ENCODE measurements at regions of chr2 and their contacts with region 1.

Region 1: DNA sequence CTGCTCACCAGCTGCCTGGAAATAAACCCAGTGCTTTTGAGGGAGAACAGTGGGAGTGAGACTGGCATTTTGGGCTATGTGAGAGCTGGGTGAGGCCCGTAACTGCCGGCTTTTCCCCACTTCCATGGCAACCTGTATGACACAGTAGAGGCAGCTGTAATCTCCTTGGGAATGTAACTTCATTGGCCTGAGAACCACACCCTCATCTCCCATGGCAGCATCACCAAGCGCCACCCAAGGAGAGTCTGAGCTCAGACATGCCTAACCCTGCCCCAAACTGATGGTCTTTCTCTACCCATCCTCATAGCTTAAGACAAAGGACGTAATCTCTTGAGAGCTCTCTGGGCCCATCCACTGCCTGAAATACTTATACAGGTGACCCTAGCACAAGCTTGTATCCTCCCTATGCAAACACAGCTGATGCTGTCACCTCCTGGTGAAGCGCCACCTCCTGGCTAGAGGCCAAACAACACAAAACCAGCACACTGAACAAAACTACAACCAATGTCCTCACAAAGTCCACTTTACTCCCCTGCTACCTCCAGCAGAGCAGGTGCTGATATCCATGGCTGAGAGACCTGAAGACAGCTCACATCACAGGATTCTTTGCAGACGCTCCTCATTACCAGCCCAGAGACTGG is 763.4 kb upstream of the NRXN1 start:
- DNase-seq: no peak
- CTCF ChIP-seq: no peak

Region 2: GRCh38 chr2:51516667-51517066 is 278.7 kb before region 1 on chr2:
- CTCF ChIA-PET with region 1: no interaction called
- POLR2A ChIA-PET with region 1: no interaction called
- DNase-seq: no peak
- CTCF ChIP-seq: no peak

Region 3: GRCh38 chr2:51628917-51629316 is 166.5 kb before region 1 on chr2:
- CTCF ChIA-PET with region 1: no interaction called
- POLR2A ChIA-PET with region 1: no interaction called
- DNase-seq: no peak
- CTCF ChIP-seq: no peak

Region 4: GRCh38 chr2:51782921-51783765 is 12.2 kb before region 1 on chr2:
- CTCF ChIA-PET with region 1: interaction called, 17 read pairs
- POLR2A ChIA-PET with region 1: no interaction called
- DNase-seq: no peak
- CTCF ChIP-seq: no peak

Region 5: GRCh38 chr2:51807229-51807628 is 11.9 kb after region 1 on chr2:
- CTCF ChIA-PET with region 1: interaction called, 11 read pairs
- POLR2A ChIA-PET with region 1: no interaction called
- DNase-seq: no peak
- CTCF ChIP-seq: no peak

Region 6: GRCh38 chr2:51846796-51847195 is 51.4 kb after region 1 on chr2:
- CTCF ChIA-PET with region 1: no interaction called
- POLR2A ChIA-PET with region 1: no interaction called
- DNase-seq: no peak
- CTCF ChIP-seq: no peak

Region 7: DNA sequence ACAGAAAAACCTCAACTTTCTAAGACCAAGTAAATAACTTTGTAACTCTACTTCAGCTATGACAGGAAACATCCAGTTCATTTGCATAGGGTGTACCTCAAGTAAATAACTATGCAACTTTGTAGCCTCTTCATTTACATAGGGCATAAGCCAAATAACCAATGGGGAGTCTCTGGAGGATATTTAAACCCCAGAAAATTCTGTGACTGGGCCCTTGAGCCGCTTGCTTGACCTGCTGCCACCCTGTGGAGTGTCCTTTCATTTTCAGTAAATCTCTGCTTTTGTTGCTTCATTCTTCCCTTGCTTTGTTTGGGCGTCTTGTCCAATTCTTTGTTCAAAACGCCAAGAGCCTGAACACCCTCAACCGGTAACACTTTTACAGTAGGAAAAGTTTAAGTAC is 349.2 kb after region 1 on chr2:
- CTCF ChIA-PET with region 1: no interaction called
- POLR2A ChIA-PET with region 1: no interaction called
- DNase-seq: no peak
- CTCF ChIP-seq: no peak

Measured in GM10248 (cell line).